ENCODE measurements at regions of chr2 and their contacts with region 1.

Region 1: DNA sequence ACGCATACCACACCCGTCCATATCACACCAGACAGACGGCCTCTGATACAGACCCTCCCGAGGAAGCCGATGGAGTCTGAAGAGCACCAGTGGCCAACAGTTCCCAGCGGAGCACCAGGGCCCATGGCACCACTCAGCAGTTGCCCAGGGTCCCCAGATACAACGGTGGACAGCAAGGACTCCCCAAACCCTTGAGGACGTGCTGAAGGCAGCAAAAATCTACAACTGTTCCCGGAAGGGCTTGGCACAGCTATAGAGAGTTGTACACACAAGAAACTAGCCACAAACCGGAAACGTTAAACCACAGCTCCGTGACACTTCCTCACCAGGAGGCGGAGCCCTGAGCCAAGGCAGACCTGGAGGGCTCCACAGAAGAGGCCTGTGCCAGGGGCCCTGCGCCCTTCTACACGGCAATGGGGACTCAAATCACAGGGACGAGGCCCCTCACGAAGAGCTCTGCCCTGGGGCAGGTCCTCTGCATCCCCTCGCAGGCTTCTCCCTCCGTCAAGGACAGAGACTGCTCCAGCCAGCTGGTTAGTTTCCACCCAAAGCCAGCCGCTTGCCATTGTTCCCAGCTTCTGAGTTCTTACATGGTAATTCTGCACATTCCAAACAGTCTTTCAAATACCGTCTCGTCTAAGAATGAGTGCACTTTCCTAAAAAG is 133.4 kb downstream of the HDAC4 start:
- DNase-seq: peak; percentile 98
- H3K4me3 Mint-ChIP-seq: peak overlapping the region; percentile 71
- H3K27ac Mint-ChIP-seq: peak overlapping the region; percentile 91
- H3K4me1 Mint-ChIP-seq: peaks cover 72% of the 10 kb centered on the region
- H3K27me3 Mint-ChIP-seq: peaks cover 14% of the 10 kb centered on the region

Region 2: GRCh38 chr2:239035361-239036078 is 231.9 kb before region 1 on chr2:
- CTCF ChIA-PET with region 1: no interaction called
- intact Hi-C with region 1: loop called (anchors 1 kb)
- DNase-seq: peak; percentile 72
- H3K4me3 Mint-ChIP-seq: no peak overlapping the region
- H3K27ac Mint-ChIP-seq: no peak overlapping the region
- H3K4me1 Mint-ChIP-seq: no peaks in the 10 kb centered on the region
- H3K27me3 Mint-ChIP-seq: peaks cover 11% of the 10 kb centered on the region

Region 3: DNA sequence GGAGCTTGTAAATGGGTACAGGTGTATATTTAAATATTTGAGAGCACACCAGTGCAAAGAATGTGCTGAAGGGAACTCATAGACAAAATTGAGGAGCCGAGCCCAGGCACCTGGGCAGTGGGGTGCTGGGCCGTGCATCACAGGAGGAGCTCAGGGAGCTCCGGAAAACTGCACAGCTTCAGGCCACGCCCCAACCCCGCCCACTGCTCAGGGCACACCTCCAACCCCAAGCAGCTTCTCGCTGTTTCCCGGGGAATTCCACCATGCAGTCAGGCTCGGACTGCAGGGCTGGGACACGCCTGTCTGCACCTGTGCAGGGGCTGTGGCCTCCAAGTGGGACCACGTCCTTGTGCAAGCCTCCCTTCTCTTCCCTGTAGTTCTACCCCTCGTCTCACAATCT is 109.6 kb before region 1 on chr2:
- CTCF ChIA-PET with region 1: no interaction called
- intact Hi-C with region 1: no loop called
- DNase-seq: no peak
- H3K4me3 Mint-ChIP-seq: no peak overlapping the region
- H3K27ac Mint-ChIP-seq: no peak overlapping the region
- H3K4me1 Mint-ChIP-seq: no peaks in the 10 kb centered on the region
- H3K27me3 Mint-ChIP-seq: no peaks in the 10 kb centered on the region

Region 4: DNA sequence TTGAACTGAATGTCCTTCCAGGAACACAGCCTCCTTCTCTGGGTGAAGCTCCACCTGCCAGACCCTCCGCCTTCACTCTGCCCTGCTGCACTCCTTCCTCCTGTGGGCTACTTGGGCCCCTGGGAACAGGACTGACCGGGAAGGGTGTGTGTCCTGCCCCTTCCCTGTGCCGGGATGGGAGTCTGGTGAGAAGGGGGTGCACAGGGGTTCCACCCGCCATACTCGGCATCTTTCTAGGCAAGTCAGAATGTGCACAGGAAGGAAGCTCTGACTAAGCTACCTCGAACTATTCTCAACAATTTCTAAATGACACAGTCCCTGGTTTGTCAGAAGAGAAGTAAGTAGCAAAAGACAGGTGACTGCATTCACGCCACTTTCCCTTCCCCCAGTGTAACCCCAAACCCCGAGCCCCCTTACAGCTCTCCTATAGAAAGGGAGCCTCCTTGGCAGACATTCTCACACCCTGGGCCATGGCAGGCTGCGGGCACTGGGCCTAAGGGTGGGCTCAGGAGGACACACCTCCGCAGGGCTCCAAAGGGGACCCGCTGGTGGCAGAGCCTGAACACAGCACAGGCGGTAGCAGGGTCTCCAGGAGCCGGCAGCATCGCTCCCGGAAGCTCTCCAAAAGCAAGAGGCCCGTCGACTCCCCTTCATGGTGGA is 50.7 kb before region 1 on chr2:
- CTCF ChIA-PET with region 1: interaction called, 4 read pairs
- intact Hi-C with region 1: loop called (anchors 1 kb)
- DNase-seq: peak; percentile 72
- H3K4me3 Mint-ChIP-seq: peak overlapping the region; percentile 69
- H3K27ac Mint-ChIP-seq: peak overlapping the region; percentile 87
- H3K4me1 Mint-ChIP-seq: peaks cover 71% of the 10 kb centered on the region
- H3K27me3 Mint-ChIP-seq: no peaks in the 10 kb centered on the region

Region 5: DNA sequence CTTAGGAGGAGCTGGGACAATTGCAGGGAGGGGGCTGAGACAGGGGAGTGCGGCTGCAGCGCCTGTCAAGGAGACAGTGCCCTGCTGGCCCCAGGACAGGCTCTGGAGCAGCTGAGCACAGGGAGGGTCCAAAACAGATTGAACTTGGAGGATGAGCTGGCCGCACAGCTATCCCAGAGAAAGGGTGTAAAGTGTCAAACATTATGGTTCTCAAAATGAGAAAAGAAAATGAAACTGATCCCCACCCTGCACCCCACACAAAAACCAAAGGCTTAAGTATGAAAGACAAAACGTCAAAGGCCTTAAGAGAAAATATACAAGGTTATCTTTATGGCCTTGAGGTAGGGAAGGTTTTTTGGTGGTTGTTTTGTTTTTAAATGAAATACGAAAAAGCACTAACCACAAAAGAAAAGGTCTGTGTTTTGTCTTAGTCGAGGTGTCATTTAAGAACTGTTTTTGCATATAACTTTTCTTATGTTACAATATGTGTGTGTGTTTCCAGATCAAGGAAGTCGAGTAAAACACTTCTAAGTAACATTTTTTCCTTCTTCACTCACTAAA is 21.6 kb after region 1 on chr2:
- CTCF ChIA-PET with region 1: interaction called, 14 read pairs
- intact Hi-C with region 1: loop called (anchors 1 kb)
- DNase-seq: peak; percentile 68
- H3K4me3 Mint-ChIP-seq: peak overlapping the region; percentile 45
- H3K27ac Mint-ChIP-seq: peak overlapping the region; percentile 86
- H3K4me1 Mint-ChIP-seq: peaks cover 76% of the 10 kb centered on the region
- H3K27me3 Mint-ChIP-seq: peaks cover 13% of the 10 kb centered on the region

Region 6: DNA sequence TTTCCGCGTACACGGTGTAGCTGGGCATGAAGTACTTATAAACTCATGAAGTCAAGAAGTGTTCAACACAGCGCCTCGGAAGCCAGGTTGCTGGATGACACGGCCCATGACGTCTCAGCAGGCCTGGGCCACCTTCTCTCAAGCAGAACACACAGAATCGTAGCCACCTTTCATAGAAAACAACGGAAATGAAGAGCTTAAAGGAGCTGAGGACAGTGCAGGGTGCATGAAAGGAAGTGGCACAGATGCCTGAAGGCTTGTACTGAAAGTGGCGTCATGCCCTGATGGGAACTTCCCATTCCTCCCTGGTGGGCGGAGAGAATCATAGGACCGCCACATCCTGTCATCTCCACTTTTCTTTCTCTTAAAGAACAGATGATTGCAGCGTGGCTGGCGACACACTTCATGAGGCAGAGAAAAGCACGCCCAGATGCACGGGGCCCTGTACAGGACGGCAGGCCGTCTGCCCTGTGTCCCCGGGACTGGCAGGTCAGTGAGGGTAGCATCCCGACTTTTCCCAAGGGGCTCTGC is 102.3 kb after region 1 on chr2:
- CTCF ChIA-PET with region 1: interaction called, 3 read pairs
- intact Hi-C with region 1: loop called (anchors 1 kb)
- DNase-seq: peak; percentile 95
- H3K4me3 Mint-ChIP-seq: peak overlapping the region; percentile 76
- H3K27ac Mint-ChIP-seq: peak overlapping the region; percentile 89
- H3K4me1 Mint-ChIP-seq: peaks cover 9% of the 10 kb centered on the region
- H3K27me3 Mint-ChIP-seq: no peaks in the 10 kb centered on the region

Region 7: DNA sequence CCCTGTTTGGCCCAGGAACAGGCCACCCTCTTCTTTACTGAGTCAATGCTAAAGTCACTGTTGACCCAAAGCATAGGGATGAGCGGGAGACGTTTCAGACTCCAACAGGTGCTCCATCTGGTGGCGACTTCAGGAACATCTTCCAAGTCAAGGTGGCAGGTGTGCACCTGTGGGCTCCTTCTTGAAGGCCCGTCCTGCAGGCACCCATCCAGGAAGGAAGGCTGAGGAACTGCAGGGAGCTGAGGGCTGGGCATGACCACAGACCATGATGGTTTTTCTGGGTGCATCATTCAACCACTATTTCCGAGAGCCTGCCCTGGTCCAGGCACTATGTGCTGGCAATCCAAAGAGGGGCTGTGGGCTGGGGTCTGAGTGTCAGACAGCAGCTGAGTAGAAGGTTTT is 614.9 kb after region 1 on chr2:
- CTCF ChIA-PET with region 1: no interaction called
- intact Hi-C with region 1: loop called (anchors 1 kb)
- DNase-seq: peak; percentile 77
- H3K4me3 Mint-ChIP-seq: no peak overlapping the region
- H3K27ac Mint-ChIP-seq: no peak overlapping the region
- H3K4me1 Mint-ChIP-seq: peaks cover 3% of the 10 kb centered on the region
- H3K27me3 Mint-ChIP-seq: peaks cover 7% of the 10 kb centered on the region

Region 8: DNA sequence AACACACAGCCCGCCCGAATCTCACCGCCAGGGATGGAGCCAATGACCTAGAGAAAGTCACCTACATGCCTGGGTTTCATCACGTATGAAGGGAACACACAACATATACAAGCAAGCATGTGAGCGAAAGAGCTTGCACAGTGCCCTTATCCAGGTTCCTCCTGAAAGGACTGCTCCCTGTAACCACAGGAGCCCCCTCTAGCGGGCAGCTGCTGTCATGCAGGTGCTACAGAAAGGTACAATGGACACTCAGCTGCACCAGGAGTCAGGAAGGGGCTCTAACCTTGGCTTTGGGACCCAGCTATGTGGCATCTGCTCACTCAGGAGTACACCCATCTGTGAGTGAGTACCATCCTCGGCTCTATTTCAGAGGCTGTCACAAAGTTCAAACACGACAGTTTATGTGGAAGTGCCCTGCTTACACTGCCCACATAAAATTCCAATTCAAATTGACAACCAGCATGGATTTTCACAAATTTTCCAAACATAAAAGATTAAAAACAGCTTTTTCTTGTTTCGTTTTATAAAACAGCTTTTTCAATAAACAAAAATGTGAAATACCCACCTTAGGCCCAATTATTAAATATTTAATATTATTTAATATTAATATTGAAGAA is 754.2 kb after region 1 on chr2:
- CTCF ChIA-PET with region 1: no interaction called
- intact Hi-C with region 1: loop called (anchors 10 kb)
- DNase-seq: peak; percentile 79
- H3K4me3 Mint-ChIP-seq: no peak overlapping the region
- H3K27ac Mint-ChIP-seq: no peak overlapping the region
- H3K4me1 Mint-ChIP-seq: peaks cover 23% of the 10 kb centered on the region
- H3K27me3 Mint-ChIP-seq: no peaks in the 10 kb centered on the region

Measured in activated naive CD4-positive, alpha-beta T cell treated with anti-CD3 and anti-CD28 coated beads for 36 hours (primary cell).